Activated naive CD4-positive, alpha-beta T cell treated with anti-CD3 and anti-CD28 coated beads for 36 hours (primary cell): ENCODE measurements at regions of chr16 and their contacts with region 1.

Region 1: DNA sequence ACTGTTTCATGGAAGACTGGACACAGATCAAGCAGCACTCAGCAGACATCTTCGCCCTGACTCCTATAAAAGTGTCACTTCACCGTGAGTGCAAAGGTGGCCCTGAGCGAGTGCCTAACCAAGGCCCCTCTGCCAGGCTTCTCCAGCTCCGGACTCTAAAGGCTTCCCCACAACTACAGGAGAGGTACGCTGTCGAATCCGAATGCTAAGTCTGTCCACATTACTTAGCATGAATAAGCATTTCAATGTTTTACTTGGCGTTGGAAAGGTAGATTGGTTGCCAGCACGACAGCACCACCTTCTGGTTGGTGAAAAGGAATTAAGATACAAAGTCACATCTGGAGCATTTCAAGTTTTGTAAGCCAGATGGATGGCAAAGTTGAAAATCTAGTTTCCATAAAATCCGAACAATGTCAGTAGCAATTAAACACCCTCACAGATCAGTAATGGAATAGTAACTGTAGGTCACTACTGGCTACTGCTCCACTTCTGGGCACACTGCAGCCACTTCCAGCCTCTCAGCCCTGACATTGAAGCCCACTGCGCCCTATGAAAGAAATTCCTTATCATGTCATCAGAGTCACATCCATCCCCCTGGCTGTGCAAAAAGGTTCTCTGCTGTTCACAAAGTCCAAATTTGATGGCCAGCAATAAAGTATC is 100.9 kb downstream of the PARN start:
- DNase-seq: peak; percentile 79
- H3K4me3 Mint-ChIP-seq: no peak overlapping the region
- H3K27ac Mint-ChIP-seq: peak overlapping the region; percentile 15
- H3K4me1 Mint-ChIP-seq: peaks cover 5% of the 10 kb centered on the region
- H3K27me3 Mint-ChIP-seq: no peaks in the 10 kb centered on the region

Region 2: GRCh38 chr16:14249291-14250032 is 279.7 kb before region 1 on chr16:
- CTCF ChIA-PET with region 1: interaction called, 8 read pairs
- intact Hi-C with region 1: loop called (anchors 1 kb)
- DNase-seq: peak; percentile 74
- H3K4me3 Mint-ChIP-seq: no peak overlapping the region
- H3K27ac Mint-ChIP-seq: no peak overlapping the region
- H3K4me1 Mint-ChIP-seq: peaks cover 3% of the 10 kb centered on the region
- H3K27me3 Mint-ChIP-seq: no peaks in the 10 kb centered on the region